ENCODE measurements at regions of chr14 and their contacts with region 1.

Region 1: DNA sequence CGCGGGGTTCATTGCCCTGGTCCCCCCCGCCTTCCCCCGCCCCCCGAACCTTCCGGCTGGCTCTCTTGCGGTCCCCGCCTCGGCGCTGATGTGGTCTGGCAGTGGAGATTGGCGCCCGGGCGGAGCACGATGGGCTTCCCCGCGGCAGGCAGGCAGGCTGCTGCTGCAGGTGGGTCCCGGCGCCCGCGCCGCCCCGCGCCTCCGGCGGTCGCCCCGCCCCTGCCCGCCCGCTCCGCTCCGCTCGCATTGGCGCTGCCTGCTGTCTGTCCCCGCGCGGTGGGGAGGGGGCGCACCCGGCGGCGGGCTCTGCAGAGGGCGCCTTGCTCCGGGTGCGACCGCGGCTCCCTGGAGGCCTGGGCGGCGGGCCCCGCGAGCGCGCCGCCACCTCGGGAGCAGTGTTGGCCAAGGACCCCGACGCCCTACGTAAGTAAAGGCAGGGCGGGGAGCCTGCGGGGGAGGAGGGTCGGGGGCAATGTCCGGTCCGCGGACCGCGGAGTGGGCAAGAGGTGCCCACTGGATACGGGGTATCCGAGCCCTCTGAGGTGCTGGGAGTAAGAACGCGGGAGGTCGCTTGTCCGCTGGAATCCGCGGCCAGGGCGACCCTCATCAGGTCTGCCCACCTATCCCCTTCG is at the start of gene AKAP5:
- DNase-seq: peak; percentile 67
- ATAC-seq: peak; percentile 91
- H3K4me3 Mint-ChIP-seq: peak within 1 kb of the TSS; percentile 86
- H3K27ac Mint-ChIP-seq: peak within 1 kb of the TSS; percentile 80
- H3K4me1 Mint-ChIP-seq: peaks cover 51% of the 10 kb centered on the region
- H3K27me3 Mint-ChIP-seq: no peaks in the 10 kb centered on the region
- CTCF ChIP-seq: no peak
- total RNA-seq, gene AKAP5: 4.3 and 5.1 TPM in 2 replicates

Region 2: DNA sequence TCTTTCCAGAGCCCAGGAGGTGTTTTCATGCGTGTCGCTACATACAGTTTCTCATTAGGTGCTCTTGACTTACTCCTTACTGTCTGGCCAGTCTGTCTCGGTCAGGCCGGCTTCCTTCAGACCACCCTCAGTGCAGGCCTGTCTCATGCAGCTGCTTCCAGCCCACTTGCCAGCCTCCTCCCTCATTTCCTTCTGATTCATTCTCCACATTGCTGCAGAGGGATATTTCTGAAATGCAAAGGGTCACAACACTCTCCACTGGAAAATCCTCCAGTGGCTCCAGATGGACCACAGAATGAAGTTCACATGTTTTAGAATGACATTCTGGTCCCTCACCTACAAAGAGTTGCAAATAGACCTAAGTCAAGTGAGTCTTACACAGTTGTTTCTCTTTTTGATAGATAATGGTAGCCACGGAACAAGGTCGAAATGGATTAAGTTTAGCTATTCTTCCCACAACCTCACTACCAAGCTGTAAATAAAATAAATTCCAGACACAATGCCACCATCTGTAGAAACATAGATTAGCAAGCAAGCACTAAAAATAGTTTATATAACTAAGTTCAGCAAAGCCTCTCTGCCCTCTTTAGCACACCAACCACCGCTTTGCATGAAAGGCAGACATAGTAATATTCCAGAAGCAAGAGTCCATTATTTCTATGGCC is 318.0 kb before region 1 on chr14:
- CTCF ChIA-PET with region 1: no interaction called
- POLR2A ChIA-PET with region 1: no interaction called
- intact Hi-C with region 1: no loop called
- DNase-seq: no peak
- ATAC-seq: no peak
- H3K4me3 Mint-ChIP-seq: no peak overlapping the region
- H3K27ac Mint-ChIP-seq: no peak overlapping the region
- H3K4me1 Mint-ChIP-seq: no peaks in the 10 kb centered on the region
- H3K27me3 Mint-ChIP-seq: no peaks in the 10 kb centered on the region
- CTCF ChIP-seq: no peak

Region 3: GRCh38 chr14:64423987-64424386 is 41.3 kb before region 1 on chr14:
- CTCF ChIA-PET with region 1: interaction called, 26 read pairs
- POLR2A ChIA-PET with region 1: no interaction called
- intact Hi-C with region 1: no loop called
- DNase-seq: no peak
- ATAC-seq: no peak
- H3K4me3 Mint-ChIP-seq: no peak overlapping the region
- H3K27ac Mint-ChIP-seq: no peak overlapping the region
- H3K4me1 Mint-ChIP-seq: no peaks in the 10 kb centered on the region
- H3K27me3 Mint-ChIP-seq: no peaks in the 10 kb centered on the region
- CTCF ChIP-seq: no peak

Region 4: GRCh38 chr14:64444984-64445845 is 20.1 kb before region 1 on chr14:
- CTCF ChIA-PET with region 1: interaction called, 3 read pairs
- POLR2A ChIA-PET with region 1: interaction called, 24 read pairs
- intact Hi-C with region 1: loop called (anchors 1 kb)
- DNase-seq: no peak
- ATAC-seq: peak; percentile 94
- H3K4me3 Mint-ChIP-seq: peak overlapping the region; percentile 39
- H3K27ac Mint-ChIP-seq: peak overlapping the region; percentile 93
- H3K4me1 Mint-ChIP-seq: peaks cover 53% of the 10 kb centered on the region
- H3K27me3 Mint-ChIP-seq: no peaks in the 10 kb centered on the region
- CTCF ChIP-seq: no peak

Region 5: DNA sequence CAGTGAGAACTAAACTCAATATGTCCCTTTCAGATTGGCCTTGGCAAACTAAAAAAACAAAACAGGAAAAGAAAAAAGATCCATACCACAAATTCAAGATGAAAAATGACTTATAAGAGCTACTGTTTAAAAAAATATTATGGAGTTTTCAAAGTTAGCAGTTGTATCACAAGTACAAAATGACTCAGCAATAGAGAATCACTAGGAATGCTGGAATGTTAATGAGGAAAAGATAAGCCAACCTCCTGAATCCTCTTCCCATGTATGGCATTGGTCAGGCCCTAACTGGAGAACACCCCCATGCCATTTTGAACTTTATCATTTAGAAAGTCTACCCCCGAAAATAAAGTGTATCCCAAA is 146.7 kb after region 1 on chr14:
- CTCF ChIA-PET with region 1: no interaction called
- POLR2A ChIA-PET with region 1: no interaction called
- intact Hi-C with region 1: no loop called
- DNase-seq: no peak
- ATAC-seq: no peak
- H3K4me3 Mint-ChIP-seq: no peak overlapping the region
- H3K27ac Mint-ChIP-seq: no peak overlapping the region
- H3K4me1 Mint-ChIP-seq: no peaks in the 10 kb centered on the region
- H3K27me3 Mint-ChIP-seq: peaks cover under 1% of the 10 kb centered on the region
- CTCF ChIP-seq: no peak

Region 6: DNA sequence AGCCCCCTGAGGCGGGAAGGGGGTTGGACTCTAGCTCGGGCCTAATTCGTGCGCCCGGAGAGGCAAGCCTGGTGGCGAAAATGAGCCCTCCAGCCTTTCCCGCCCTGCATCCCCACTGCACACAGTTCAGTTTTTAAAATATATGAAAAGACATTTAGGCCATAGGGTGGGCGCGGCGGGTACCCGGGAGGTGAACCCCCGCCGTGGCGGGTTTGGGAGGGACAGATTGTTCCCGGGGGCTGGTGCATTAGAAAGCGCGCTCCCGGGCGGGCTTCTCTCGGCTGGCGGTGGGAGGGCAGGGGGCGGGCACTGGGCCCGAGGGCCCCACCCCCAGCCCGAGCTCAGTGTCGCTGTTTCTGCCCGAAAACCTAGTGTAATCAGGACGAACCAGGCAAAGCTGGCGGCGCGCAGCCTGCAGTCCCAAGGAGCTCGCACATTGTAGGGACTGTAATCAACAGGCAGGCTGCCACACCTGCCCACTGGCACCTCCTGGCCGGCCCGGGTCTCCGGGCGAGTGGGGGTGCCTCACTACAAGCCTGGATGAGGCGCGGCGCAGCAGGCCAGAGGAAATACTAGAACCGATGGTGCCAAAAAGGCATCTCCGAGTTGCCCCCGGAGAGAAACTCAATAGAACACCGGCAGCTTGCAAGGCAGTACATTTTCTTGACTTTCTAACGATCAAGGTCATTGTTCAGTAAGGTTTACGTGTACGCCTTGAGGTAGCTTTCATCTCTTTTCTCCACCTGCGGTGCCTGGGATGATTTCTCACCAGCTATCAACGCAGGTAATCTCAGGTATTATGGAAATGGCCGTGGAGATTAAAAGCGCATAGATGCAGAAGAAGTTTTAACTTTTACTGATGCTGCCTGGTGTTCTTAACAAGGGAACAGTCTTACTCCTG is 415.2 kb after region 1 on chr14:
- CTCF ChIA-PET with region 1: no interaction called
- POLR2A ChIA-PET with region 1: no interaction called
- intact Hi-C with region 1: no loop called
- DNase-seq: peak; percentile 49
- ATAC-seq: peak; percentile 80
- H3K4me3 Mint-ChIP-seq: peak overlapping the region; percentile 83
- H3K27ac Mint-ChIP-seq: no peak overlapping the region
- H3K4me1 Mint-ChIP-seq: peaks cover 8% of the 10 kb centered on the region
- H3K27me3 Mint-ChIP-seq: peaks cover 42% of the 10 kb centered on the region
- CTCF ChIP-seq: no peak